BJ (cell line): ENCODE measurements at regions of chr2 and their contacts with region 1.

Region 1: GRCh38 chr2:42171396-42171980 is 2.3 kb downstream of the EML4 start:
- DNase-seq: no peak
- H3K4me3 ChIP-seq: peak overlapping the region; percentile 66
- H3K27me3 ChIP-seq: no peaks in the 10 kb centered on the region
- CTCF ChIP-seq: no peak

Region 2: DNA sequence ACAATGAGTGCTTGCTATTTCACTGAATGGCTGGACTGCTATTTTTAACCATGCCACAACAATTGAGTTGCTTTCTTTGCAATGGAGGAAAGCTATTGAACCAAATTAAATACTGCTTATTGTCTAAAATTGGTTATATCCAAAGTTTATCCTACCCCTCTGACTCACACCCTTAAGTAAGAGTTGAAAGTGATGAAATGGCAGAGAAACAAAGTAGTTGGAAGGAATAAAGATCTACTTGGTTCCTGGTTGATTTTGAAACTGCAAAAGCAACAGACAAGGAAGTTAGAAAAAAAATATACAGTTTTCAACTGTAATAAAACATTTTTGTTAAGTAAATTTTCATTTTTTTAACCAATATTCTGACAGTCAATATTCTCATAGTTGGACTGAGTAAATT is 45.2 kb after region 1 on chr2:
- CTCF ChIA-PET with region 1: no interaction called
- POLR2A ChIA-PET with region 1: interaction called, 15 read pairs
- DNase-seq: no peak
- H3K4me3 ChIP-seq: no peak overlapping the region
- H3K27me3 ChIP-seq: no peaks in the 10 kb centered on the region
- CTCF ChIP-seq: no peak